CD4-positive, alpha-beta T cell (primary cell): ENCODE measurements at regions of chr22 and their contacts with region 1.

Region 1: GRCh38 chr22:39414886-39415285 is 15.3 kb downstream of the TAB1 start:
- DNase-seq: no peak
- ATAC-seq: no peak
- H3K4me3 ChIP-seq: no peak overlapping the region
- H3K4me3 Mint-ChIP-seq: peak overlapping the region; percentile 69
- H3K27ac ChIP-seq: no peak overlapping the region
- H3K27ac Mint-ChIP-seq: peak overlapping the region; percentile 87
- H3K4me1 ChIP-seq: peaks cover 53% of the 10 kb centered on the region
- H3K4me1 Mint-ChIP-seq: peaks cover 62% of the 10 kb centered on the region
- H3K27me3 ChIP-seq: no peaks in the 10 kb centered on the region
- H3K27me3 Mint-ChIP-seq: no peaks in the 10 kb centered on the region
- CTCF ChIP-seq: no peak

Region 2: DNA sequence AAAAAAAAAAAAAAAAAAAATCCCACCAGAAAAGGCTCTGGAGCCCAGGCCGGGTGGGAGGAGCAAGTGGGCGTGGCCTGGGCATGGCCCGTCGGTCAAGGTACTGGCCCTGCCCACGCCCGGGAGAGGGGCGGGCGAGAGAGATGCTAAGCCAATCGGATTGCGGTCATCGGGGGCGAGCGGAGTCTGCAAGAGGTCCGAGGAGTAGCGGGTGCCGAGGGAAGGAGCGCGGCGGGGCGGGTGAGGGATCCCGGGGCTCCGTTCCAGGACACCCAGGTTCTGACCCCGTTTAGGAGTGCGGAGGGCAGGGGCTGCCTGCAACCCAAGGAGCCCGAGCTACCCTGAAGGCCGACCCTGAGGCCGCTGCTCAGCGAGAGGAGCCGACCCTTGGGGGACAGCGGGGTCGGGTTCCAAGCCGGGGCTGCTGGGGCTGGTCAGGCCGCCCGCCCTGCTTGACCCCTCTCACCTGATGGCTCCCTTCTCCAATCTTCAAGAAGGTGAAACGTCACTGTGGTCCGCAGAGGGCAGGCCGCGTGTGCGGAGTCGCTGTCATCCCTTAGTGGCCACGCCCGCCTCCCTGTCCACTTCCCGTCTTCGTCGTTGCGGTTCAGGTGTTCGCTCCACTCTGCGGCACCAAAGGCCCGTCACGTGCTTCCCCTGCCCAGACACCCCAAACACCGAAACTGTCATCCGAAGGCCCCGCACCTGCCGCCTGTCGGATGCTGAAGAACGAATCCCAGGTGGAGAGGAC is 26.4 kb before region 1 on chr22:
- CTCF ChIA-PET with region 1: no interaction called
- POLR2A ChIA-PET with region 1: interaction called, 12 read pairs
- intact Hi-C with region 1: no loop called
- DNase-seq: peak; percentile 69 to 95 (median 79)
- ATAC-seq: peak; percentile 93
- H3K4me3 ChIP-seq: peak overlapping the region; percentile 92
- H3K4me3 Mint-ChIP-seq: peak overlapping the region; percentile 95
- H3K27ac ChIP-seq: peak overlapping the region; percentile 81 to 88
- H3K27ac Mint-ChIP-seq: peak overlapping the region; percentile 99
- H3K4me1 ChIP-seq: peaks cover 28% of the 10 kb centered on the region
- H3K4me1 Mint-ChIP-seq: peaks cover 21% of the 10 kb centered on the region
- H3K27me3 ChIP-seq: no peaks in the 10 kb centered on the region
- H3K27me3 Mint-ChIP-seq: no peaks in the 10 kb centered on the region
- CTCF ChIP-seq: no peak

Region 3: DNA sequence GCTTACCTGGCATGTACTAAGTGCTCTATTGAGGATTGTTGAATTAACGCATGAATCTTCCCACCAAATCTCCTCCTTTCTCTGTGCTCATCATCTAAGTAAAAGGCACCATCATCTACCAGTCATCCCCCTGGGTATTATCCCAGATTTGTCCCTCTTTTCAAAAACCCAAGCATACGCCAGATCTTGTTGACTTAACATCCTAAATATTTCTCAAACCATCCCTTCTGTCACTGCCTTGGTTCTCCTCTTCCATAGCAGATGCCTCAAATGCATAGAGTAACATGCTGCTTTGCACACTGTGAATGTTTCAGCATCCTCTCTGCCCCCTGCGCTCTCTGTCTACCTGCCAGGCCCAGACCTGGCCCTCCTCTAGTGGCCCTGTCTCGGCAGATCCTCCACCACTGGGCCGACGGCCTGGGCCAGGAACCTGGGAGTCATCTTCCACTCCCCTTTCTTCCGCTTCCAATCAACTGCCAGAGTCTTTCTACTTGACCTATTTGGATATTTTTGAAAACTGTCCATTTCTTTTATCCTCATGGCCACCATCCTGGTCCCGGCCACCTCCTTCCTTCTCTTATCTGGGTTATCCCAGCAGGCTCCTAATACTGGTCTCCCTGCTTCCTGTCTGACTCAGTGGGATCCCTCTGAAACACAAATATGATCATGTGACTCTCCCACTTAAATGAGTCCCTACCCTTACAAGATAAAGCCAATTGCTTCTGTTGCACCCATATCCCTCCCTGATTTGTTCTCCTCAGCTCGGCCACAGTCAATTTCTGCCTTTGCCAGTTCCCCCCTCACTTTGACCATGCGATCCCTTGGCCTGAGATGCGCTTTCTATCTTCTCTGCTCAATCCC is 18.7 kb before region 1 on chr22:
- CTCF ChIA-PET with region 1: interaction called, 27 read pairs
- POLR2A ChIA-PET with region 1: interaction called, 60 read pairs
- intact Hi-C with region 1: loop called in 1 of 2 experiments (anchors 1 kb)
- DNase-seq: no peak
- ATAC-seq: no peak
- H3K4me3 ChIP-seq: no peak overlapping the region
- H3K4me3 Mint-ChIP-seq: peak overlapping the region; percentile 17
- H3K27ac ChIP-seq: no peak overlapping the region
- H3K27ac Mint-ChIP-seq: no peak overlapping the region
- H3K4me1 ChIP-seq: peaks cover 19% of the 10 kb centered on the region
- H3K4me1 Mint-ChIP-seq: peaks cover 18% of the 10 kb centered on the region
- H3K27me3 ChIP-seq: no peaks in the 10 kb centered on the region
- H3K27me3 Mint-ChIP-seq: no peaks in the 10 kb centered on the region
- CTCF ChIP-seq: no peak

Region 4: DNA sequence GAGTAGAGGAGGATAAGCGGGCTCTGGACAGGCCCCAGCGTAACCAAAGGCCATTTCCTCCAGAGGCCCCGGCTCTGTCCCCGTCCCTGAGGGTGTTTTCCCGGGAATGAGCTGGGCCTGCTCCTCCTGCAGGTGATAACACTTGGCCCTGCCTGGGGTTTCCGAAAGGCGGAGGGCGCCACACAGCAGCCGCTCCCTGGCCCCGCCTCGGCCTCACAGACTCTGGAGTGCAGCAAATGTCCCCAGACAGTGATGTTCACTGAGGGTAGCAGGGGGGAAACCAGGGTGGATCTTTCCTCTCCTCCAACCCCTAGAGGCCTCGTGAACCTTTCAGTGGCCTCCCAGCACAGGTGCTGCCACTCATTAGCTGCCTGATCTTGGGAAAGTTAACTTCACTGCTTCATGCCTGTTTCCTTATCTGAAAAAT is 31.4 kb after region 1 on chr22:
- CTCF ChIA-PET with region 1: no interaction called
- POLR2A ChIA-PET with region 1: interaction called, 13 read pairs
- intact Hi-C with region 1: no loop called
- DNase-seq: no peak
- ATAC-seq: peak; percentile 46
- H3K4me3 ChIP-seq: no peak overlapping the region
- H3K4me3 Mint-ChIP-seq: no peak overlapping the region
- H3K27ac ChIP-seq: no peak overlapping the region
- H3K27ac Mint-ChIP-seq: no peak overlapping the region
- H3K4me1 ChIP-seq: peaks cover 29% of the 10 kb centered on the region
- H3K4me1 Mint-ChIP-seq: peaks cover 23% of the 10 kb centered on the region
- H3K27me3 ChIP-seq: no peaks in the 10 kb centered on the region
- H3K27me3 Mint-ChIP-seq: peaks cover 2% of the 10 kb centered on the region
- CTCF ChIP-seq: no peak